ENCODE measurements at regions of chr3 and their contacts with region 1.

Region 1: GRCh38 chr3:89098964-89099585 is 8.3 kb upstream of the EPHA3 start:
- DNase-seq: peak; percentile 67
- H3K4me3 ChIP-seq: no peak overlapping the region
- H3K27ac ChIP-seq: no peak overlapping the region
- H3K4me1 ChIP-seq: no peaks in the 10 kb centered on the region
- CTCF ChIP-seq: peak; percentile 97

Region 2: GRCh38 chr3:88203642-88204055 is 895.4 kb before region 1 on chr3:
- CTCF ChIA-PET with region 1: no interaction called
- POLR2A ChIA-PET with region 1: no interaction called
- intact Hi-C with region 1: loop called (anchors 1 kb)
- DNase-seq: peak; percentile 67
- H3K4me3 ChIP-seq: no peak overlapping the region
- H3K27ac ChIP-seq: no peak overlapping the region
- H3K4me1 ChIP-seq: no peaks in the 10 kb centered on the region
- CTCF ChIP-seq: peak; percentile 98

Region 3: DNA sequence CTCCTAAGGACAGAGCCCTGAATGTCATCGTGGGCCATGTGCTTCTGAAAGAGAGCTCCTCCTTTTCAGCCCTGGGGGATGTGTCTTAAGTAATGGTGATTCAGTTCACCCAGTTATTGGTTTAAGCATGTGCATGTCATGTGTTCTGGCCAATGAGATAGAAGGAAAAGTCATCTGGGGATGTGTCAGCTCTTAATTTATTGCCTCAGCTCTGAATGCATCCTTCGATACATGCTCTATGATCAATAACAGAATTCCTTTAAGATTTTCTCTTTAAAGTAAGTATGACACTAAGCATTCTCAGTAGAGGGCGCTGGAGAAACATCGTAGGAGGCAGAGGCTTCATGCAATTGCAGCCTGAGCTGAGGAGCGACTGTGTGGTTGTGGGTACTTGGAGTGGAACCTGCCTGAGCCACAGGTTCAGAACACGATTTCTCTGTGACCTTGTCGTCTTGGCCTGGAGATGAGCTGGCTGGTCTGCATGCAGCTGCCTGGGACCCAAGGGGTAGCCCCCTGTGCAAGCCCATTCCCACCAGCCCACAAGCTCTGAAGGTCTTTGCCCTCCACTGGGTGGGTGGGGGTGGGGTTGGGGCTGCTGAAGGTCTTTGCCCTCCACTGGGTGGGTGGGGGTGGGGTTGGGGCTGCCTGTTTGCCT is 879.8 kb before region 1 on chr3:
- CTCF ChIA-PET with region 1: no interaction called
- POLR2A ChIA-PET with region 1: no interaction called
- intact Hi-C with region 1: loop called (anchors 1 kb)
- DNase-seq: peak; percentile 81
- H3K4me3 ChIP-seq: no peak overlapping the region
- H3K27ac ChIP-seq: no peak overlapping the region
- H3K4me1 ChIP-seq: no peaks in the 10 kb centered on the region
- CTCF ChIP-seq: peak; percentile 89

Region 4: GRCh38 chr3:89113903-89114840 is 15.1 kb after region 1 on chr3:
- CTCF ChIA-PET with region 1: no interaction called
- POLR2A ChIA-PET with region 1: no interaction called
- intact Hi-C with region 1: no loop called
- DNase-seq: no peak
- H3K4me3 ChIP-seq: no peak overlapping the region
- H3K27ac ChIP-seq: no peak overlapping the region
- H3K4me1 ChIP-seq: no peaks in the 10 kb centered on the region
- CTCF ChIP-seq: no peak

Measured in OCI-LY7 (cell line).